Colonic mucosa (tissue), 4 donors: ENCODE measurements at regions of chr11 and their contacts with region 1.

Region 1: DNA sequence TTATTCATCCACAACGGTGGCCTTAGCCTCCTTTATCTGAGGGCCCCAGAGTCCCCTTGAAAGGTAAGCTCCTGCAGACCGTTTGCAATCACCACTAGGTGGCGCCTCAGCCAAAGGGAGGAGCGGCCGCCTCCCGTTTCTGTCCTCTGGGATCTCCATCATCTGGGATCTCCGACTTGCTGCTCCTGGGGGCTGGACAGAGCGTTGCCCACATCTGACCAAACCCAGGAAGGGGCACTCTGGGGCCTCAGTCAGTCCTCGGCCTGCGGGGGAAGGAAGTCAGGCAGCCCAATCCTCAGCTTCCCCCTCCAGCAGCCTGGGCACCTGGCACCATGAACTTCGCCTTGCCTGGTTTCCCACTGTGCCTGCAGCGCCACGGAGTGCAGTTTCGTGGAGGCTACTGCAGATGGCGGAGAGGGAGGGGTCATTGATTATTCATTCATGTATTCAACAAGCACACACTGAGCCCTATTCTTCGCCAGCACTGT is 23.5 kb downstream of the TP53I11 start:
- DNase-seq: peak; percentile 77
- H3K4me3 ChIP-seq: no peak overlapping the region
- H3K27ac ChIP-seq: no peak overlapping the region
- H3K4me1 ChIP-seq: no peaks in the 10 kb centered on the region
- H3K27me3 ChIP-seq: no peaks in the 10 kb centered on the region
- CTCF ChIP-seq: peak; percentile 84

Region 2: GRCh38 chr11:45285930-45286632 is 358.9 kb after region 1 on chr11 and contains the start of gene SYT13:
- intact Hi-C with region 1: loop called (anchors 5 kb)
- DNase-seq: peak; percentile 85
- H3K4me3 ChIP-seq: peak within 1 kb of the TSS; percentile 49
- H3K27ac ChIP-seq: peak within 1 kb of the TSS; percentile 22
- H3K4me1 ChIP-seq: no peaks in the 10 kb centered on the region
- H3K27me3 ChIP-seq: peaks cover 4% of the 10 kb centered on the region
- CTCF ChIP-seq: no peak
- total RNA-seq, gene SYT13: 23.4 to 31.5 TPM

Region 3: DNA sequence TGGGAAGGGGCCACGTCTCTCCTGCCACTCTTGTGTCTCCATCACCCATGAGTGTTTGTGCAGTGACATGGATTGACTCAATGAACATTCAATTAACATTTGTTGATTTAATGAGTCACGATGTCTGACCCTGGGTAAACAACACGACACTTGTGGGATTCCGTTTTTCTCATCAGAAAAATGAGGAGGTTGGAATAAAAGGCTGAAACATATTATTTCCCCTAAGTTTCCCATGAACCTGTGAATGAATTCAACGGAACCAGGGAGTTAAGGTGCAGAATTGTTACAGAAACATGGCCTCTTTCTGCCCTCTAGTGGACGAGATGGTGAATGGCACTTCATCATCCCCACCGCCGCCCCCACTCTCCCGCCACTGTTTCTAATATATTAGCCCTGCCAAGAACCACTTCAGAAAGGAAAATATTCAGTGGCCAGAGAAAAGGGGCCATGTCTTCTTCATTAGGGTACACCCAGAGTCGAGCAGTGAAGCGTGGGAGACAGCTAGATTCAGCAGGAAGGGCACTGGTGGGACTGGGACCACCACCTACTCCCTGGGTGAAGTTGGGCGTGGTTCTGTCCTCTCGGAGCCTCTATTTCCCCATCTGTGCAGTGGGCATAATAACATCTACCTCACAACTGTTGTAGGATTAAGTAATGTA is 405.2 kb after region 1 on chr11:
- intact Hi-C with region 1: loop called (anchors 5 kb)
- DNase-seq: peak; percentile 38
- H3K4me3 ChIP-seq: no peak overlapping the region
- H3K27ac ChIP-seq: no peak overlapping the region
- H3K4me1 ChIP-seq: no peaks in the 10 kb centered on the region
- H3K27me3 ChIP-seq: no peaks in the 10 kb centered on the region
- CTCF ChIP-seq: peak; percentile 82